Activated CD4-positive, alpha-beta T cell treated with anti-CD3 and anti-CD28 coated beads for 36 hours (primary cell): ENCODE measurements at regions of chr16 and their contacts with region 1.

Region 1: GRCh38 chr16:11297492-11298142 is 16.5 kb upstream of the PRM1 start:
- DNase-seq: peak; percentile 84
- ATAC-seq: peak; percentile 81
- H3K4me3 Mint-ChIP-seq: peak overlapping the region; percentile 59
- H3K27ac Mint-ChIP-seq: peak overlapping the region; percentile 78
- H3K4me1 Mint-ChIP-seq: peaks cover 28% of the 10 kb centered on the region
- H3K27me3 Mint-ChIP-seq: no peaks in the 10 kb centered on the region

Region 2: GRCh38 chr16:9597967-9598730 is 1699.5 kb before region 1 on chr16:
- CTCF ChIA-PET with region 1: no interaction called
- POLR2A ChIA-PET with region 1: no interaction called
- intact Hi-C with region 1: no loop called
- DNase-seq: no peak
- ATAC-seq: no peak
- H3K4me3 Mint-ChIP-seq: no peak overlapping the region
- H3K27ac Mint-ChIP-seq: no peak overlapping the region
- H3K4me1 Mint-ChIP-seq: no peaks in the 10 kb centered on the region
- H3K27me3 Mint-ChIP-seq: no peaks in the 10 kb centered on the region

Region 3: GRCh38 chr16:11263737-11264136 is 33.9 kb before region 1 on chr16:
- CTCF ChIA-PET with region 1: interaction called, 4 read pairs
- POLR2A ChIA-PET with region 1: interaction called, 3 read pairs
- intact Hi-C with region 1: loop called (anchors 2 to 5 kb)
- DNase-seq: peak; percentile 81
- ATAC-seq: peak; percentile 90
- H3K4me3 Mint-ChIP-seq: peak overlapping the region; percentile 19
- H3K27ac Mint-ChIP-seq: peak overlapping the region; percentile 90
- H3K4me1 Mint-ChIP-seq: peaks cover 37% of the 10 kb centered on the region
- H3K27me3 Mint-ChIP-seq: no peaks in the 10 kb centered on the region

Region 4: DNA sequence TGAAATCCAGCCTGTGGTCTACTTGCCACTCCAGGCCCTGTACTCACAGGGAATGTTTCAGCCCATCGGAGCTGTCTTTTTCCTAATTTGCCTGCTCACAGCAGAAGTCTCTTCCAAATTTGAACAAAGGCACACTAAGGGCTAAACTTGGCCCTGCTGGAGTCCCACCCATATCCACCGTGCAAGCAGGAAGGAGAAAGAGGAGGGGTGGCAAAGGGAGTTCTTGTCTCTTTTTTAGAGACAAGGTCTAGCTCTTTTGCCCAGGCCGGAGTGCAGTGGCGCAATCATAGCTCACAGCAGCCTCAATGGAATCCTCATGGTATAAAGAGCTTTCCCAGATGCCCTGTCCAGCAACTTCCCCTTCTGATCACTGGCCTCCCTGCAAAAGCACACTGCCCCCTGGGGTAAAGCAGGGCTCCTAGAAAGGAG is 13.8 kb before region 1 on chr16:
- CTCF ChIA-PET with region 1: no interaction called
- POLR2A ChIA-PET with region 1: no interaction called
- intact Hi-C with region 1: no loop called
- DNase-seq: no peak
- ATAC-seq: no peak
- H3K4me3 Mint-ChIP-seq: no peak overlapping the region
- H3K27ac Mint-ChIP-seq: no peak overlapping the region
- H3K4me1 Mint-ChIP-seq: peaks cover 22% of the 10 kb centered on the region
- H3K27me3 Mint-ChIP-seq: no peaks in the 10 kb centered on the region